Ascending aorta (tissue), 2 donors: ENCODE measurements at regions of chr11 and their contacts with region 1.

Region 1: GRCh38 chr11:59753650-59754493 is 1.3 kb upstream of the STX3 start:
- DNase-seq: peak; percentile 53 to 93
- H3K4me3 ChIP-seq: peak overlapping the region; percentile 89 to 97
- H3K27ac ChIP-seq: peak overlapping the region; percentile 95 to 97
- H3K4me1 ChIP-seq: peaks cover 0 to 9% of the 10 kb centered on the region in 2 donors
- H3K27me3 ChIP-seq: no peaks in the 10 kb centered on the region
- CTCF ChIP-seq: peak; percentile 75 to 91 (median 86)

Region 2: GRCh38 chr11:59076876-59077571 is 676.8 kb before region 1 on chr11:
- intact Hi-C with region 1: no loop called
- DNase-seq: no peak
- H3K4me3 ChIP-seq: no peak overlapping the region
- H3K27ac ChIP-seq: no peak overlapping the region
- H3K4me1 ChIP-seq: no peaks in the 10 kb centered on the region
- H3K27me3 ChIP-seq: no peaks in the 10 kb centered on the region
- CTCF ChIP-seq: no peak

Region 3: DNA sequence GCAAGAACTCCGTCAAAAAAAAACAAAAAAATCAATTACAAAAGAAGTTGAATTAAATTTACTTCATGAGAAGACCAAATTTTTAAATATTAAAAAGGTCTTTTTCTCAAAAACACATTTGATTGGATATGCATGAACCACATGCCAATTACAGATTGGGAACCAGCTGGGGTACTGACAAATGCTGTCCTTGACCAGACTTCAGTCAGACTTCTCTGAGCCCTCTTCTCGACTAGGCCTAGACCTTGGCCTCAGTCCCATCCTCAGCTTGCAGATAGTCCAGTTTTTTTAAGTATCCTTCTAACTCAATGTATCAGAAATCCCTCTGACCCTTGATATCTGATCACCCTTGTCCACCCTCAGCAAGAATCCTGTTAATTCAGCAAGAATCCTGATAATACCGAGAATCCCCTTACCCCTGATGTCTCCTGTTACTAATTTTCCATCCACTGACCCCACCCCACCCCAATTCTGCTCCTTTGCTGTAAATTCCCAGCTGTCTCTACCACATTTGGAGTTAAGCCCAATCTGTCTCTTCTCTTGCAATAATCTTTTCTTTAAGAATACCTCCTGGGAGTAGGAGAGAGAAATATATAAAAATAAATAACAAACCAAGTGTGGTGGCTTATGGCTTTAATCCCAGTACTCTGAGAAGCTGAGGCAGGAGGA is 211.6 kb before region 1 on chr11:
- intact Hi-C with region 1: loop called (anchors 2 kb)
- DNase-seq: no peak
- H3K4me3 ChIP-seq: no peak overlapping the region
- H3K27ac ChIP-seq: no peak overlapping the region
- H3K4me1 ChIP-seq: no peaks in the 10 kb centered on the region
- H3K27me3 ChIP-seq: no peaks in the 10 kb centered on the region
- CTCF ChIP-seq: no peak

Region 4: DNA sequence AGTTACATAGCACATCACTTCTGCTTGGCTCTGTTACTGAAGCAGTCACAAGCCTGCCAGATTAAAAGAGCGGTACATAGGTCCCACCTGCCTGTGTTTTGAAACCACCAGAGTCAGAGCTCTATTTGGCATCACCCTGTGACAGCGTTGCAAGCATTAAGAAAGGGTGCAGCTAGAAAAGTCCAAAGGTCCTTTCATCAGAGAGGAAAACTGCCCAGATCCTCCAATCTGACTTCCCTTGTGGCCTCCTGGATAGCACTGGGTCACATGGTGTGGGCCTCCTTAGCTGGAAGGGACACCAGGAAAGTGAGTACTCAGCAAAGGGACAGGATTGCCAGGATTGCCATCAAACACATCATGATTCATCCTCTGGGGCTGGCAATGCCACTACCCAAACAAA is 24.2 kb after region 1 on chr11:
- intact Hi-C with region 1: loop called (anchors 1 kb)
- DNase-seq: peak in 1 of 2 donors; percentile 76
- H3K4me3 ChIP-seq: peak overlapping the region in 1 of 2 donors; percentile 15
- H3K27ac ChIP-seq: peak overlapping the region; percentile 16 to 60
- H3K4me1 ChIP-seq: peaks cover 4 to 9% of the 10 kb centered on the region in 2 donors
- H3K27me3 ChIP-seq: no peaks in the 10 kb centered on the region
- CTCF ChIP-seq: no peak

Region 5: DNA sequence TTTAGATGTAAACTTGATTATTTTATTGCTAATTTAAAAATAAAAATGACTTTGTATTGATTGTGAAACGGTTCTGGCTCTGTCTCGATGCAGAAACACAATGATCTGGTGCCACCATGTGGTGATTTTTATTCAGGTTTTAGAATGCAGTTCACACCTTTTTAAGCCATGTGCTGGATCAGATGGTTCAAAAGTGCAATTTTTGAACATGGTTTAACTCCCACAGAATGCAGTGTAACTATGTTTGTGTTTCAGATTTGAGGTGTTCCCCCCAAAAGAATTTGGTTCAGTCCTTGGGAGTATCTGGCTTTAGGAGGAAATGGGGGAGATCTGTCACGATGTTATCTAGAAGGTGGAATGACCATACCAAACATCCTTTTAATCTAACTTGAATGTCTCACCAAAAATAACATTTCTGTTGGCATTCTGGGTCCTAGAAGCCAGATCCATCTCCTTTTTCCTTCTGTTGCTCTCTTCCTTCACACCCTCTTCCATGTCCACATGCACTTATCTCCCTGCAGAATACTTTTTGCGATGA is 48.8 kb after region 1 on chr11:
- intact Hi-C with region 1: loop called (anchors 1 kb)
- DNase-seq: no peak
- H3K4me3 ChIP-seq: no peak overlapping the region
- H3K27ac ChIP-seq: peak overlapping the region; percentile 22 to 68
- H3K4me1 ChIP-seq: peaks cover 0 to 4% of the 10 kb centered on the region in 2 donors
- H3K27me3 ChIP-seq: no peaks in the 10 kb centered on the region
- CTCF ChIP-seq: peak; percentile 51 to 69 (median 68)